ENCODE measurements at regions of chr17 and their contacts with region 1.

Region 1: DNA sequence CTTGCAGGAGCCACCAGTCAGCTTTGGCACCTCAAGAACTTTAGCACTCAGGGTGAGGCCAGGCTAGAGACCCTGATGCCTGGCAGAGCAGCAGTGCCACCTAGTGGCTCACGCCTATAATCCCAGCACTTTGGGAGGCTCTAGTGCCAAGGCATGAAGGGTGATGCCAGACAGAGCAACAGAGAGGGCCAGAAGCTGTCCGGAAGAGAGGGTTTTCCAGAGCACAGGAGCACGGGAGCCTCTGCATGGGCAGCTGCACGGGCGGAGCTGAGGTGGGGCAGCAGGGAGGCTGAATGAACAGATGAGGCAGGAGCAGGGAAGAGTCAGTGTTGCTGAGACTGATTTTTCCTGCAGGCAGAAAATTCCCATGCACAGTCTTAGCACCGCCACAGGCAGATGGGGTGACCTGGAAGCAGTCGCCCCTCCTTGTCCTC is 38.9 kb downstream of the MYH3 start:
- ATAC-seq: peak; percentile 81 to 95 (median 86)
- H3K4me3 ChIP-seq: no peak overlapping the region
- H3K27ac ChIP-seq: no peak overlapping the region
- H3K4me1 ChIP-seq: peaks cover 8 to 12% of the 10 kb centered on the region in 2 donors

Region 2: GRCh38 chr17:9729034-9729650 is 889.1 kb before region 1 on chr17:
- in situ Hi-C with region 1: loop called in 1 of 9 experiments (anchors 25 kb)
- ATAC-seq: peak; percentile 36 to 60 (median 46)
- H3K4me3 ChIP-seq: no peak overlapping the region
- H3K27ac ChIP-seq: no peak overlapping the region
- H3K4me1 ChIP-seq: peaks cover 0 to 3% of the 10 kb centered on the region in 2 donors

Region 3: GRCh38 chr17:9924735-9925191 is 693.5 kb before region 1 on chr17:
- in situ Hi-C with region 1: loop called in 8 of 9 experiments (anchors 10 to 25 kb)
- ATAC-seq: peak; percentile 73 to 91 (median 84)
- H3K4me3 ChIP-seq: no peak overlapping the region
- H3K27ac ChIP-seq: no peak overlapping the region
- H3K4me1 ChIP-seq: peaks cover 3 to 7% of the 10 kb centered on the region in 2 donors

Region 4: GRCh38 chr17:10316801-10317542 is 301.2 kb before region 1 on chr17:
- in situ Hi-C with region 1: loop called in 4 of 9 experiments (anchors 10 to 25 kb)
- ATAC-seq: peak in 5 of 8 experiments; percentile 36 to 87 (median 69)
- H3K4me3 ChIP-seq: no peak overlapping the region
- H3K27ac ChIP-seq: no peak overlapping the region
- H3K4me1 ChIP-seq: no peaks in the 10 kb centered on the region

Region 5: DNA sequence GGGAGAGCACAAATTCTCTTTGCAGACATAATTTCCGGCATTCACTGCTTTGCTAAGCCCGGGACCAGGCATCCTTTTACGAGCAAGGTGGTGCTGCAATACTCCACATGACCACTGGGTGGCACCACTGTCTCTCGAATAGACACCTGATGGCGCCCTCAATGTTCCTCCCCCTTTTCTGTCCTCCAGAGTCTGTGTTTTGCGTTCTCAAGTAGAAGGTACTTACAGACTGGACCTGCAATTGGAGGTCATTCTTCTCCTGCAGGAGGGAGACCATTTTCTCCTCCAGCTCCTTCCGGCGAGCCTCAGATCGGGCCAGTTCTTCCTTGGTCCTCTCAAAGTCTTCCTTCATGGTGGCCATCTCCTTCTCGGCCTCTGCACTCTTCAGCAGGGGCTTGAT is 290.6 kb before region 1 on chr17:
- in situ Hi-C with region 1: loop called in 6 of 9 experiments (anchors 10 to 25 kb)
- ATAC-seq: peak in 6 of 8 experiments; percentile 49 to 92 (median 70)
- H3K4me3 ChIP-seq: no peak overlapping the region
- H3K27ac ChIP-seq: no peak overlapping the region
- H3K4me1 ChIP-seq: no peaks in the 10 kb centered on the region

Region 6: DNA sequence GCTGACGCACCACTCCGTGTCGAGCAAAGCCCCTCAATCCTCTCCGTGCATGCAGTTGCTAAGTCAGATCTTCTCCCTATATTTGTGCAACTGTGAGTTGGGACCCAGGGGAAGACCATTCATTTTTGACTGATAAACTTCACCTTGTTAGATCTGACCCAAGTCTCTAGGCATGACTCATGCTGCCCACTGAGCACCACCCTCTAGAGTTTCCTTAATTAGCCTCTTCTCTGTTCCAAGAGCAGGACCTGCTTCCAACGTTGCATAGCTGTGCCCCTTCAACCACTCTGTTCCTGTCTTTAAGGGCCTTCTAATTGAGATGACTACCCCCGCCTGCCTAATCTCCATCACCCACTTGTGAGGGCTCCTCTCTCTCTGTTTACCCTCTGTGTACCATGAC is 248.0 kb before region 1 on chr17:
- in situ Hi-C with region 1: no loop called
- ATAC-seq: no peak
- H3K4me3 ChIP-seq: no peak overlapping the region
- H3K27ac ChIP-seq: no peak overlapping the region
- H3K4me1 ChIP-seq: no peaks in the 10 kb centered on the region

Measured in motor neuron (in vitro differentiated cells).